T-cell (primary cell): ENCODE measurements at regions of chrX and their contacts with region 1.

Region 1: GRCh38 chrX:53211391-53211978 is 13.5 kb downstream of the KDM5C start:
- DNase-seq: no peak
- ATAC-seq: no peak
- H3K4me3 ChIP-seq: no peak overlapping the region
- H3K4me3 Mint-ChIP-seq: no peak overlapping the region
- H3K27ac ChIP-seq: no peak overlapping the region
- H3K27ac Mint-ChIP-seq: no peak overlapping the region
- H3K4me1 ChIP-seq: no peaks in the 10 kb centered on the region
- H3K4me1 Mint-ChIP-seq: peaks cover 0 to 10% (median 0%) of the 10 kb centered on the region in 3 donors
- H3K27me3 ChIP-seq: no peaks in the 10 kb centered on the region
- H3K27me3 Mint-ChIP-seq: no peaks in the 10 kb centered on the region

Region 2: GRCh38 chrX:53190363-53190960 is 21.0 kb before region 1 on chrX:
- CTCF ChIA-PET with region 1: interaction called in 1 of 2 experiments, 5 read pairs
- POLR2A ChIA-PET with region 1: interaction called in 1 of 2 experiments, 10 read pairs
- DNase-seq: peak in 1 of 35 experiments; percentile 19
- ATAC-seq: no peak
- H3K4me3 ChIP-seq: no peak overlapping the region
- H3K4me3 Mint-ChIP-seq: no peak overlapping the region
- H3K27ac ChIP-seq: no peak overlapping the region
- H3K27ac Mint-ChIP-seq: peak overlapping the region; percentile 55 to 59
- H3K4me1 ChIP-seq: no peaks in the 10 kb centered on the region
- H3K4me1 Mint-ChIP-seq: no peaks in the 10 kb centered on the region
- H3K27me3 ChIP-seq: no peaks in the 10 kb centered on the region
- H3K27me3 Mint-ChIP-seq: no peaks in the 10 kb centered on the region

Region 3: DNA sequence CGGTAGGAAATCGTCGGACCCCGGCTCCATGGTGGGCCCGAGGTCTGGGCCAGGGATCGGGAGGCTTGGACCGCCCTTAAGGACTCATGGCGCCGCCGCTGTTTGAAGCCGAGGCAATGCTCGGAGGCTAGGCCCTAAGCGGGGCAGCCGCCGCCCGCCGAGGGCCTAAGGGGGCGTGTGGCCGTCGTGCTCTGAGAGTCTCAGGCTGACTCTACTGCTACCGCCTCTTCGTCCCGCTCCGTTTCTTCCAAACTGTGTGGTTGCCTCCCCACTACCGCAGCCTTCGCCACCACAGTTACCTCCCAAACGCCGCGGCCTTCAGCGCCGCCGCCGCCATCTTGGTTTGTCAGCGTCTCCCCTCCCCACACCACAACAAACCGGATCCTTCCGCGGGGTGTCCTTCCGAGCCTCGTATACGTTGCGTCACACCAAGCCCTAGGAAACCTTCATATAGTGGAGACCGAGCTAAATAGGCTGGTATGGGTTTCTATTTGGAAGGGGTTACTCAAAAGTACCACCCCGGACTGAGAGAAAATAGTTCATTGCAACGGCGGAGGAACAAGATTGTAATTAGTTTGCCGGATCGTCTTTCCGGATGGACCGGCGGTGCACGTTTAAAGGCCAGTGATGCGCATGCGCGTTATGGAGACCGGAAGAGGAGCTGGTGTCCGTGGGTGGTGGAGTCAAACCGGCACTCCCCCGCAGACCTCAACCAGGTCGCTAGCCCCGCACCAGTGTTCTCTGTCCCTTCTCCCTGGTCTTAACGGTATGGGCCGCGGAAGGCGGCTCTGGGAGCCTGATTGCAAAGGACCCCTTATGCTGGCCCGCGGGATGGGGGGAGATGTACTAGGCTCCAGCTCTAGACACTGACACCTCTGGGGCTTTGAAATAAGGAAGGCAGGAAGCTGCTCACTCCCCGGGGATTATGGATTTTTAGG is 13.6 kb after region 1 on chrX and contains the start of gene KDM5C:
- CTCF ChIA-PET with region 1: no interaction called
- POLR2A ChIA-PET with region 1: interaction called, 3 to 11 read pairs
- DNase-seq: peak; percentile 75 to 96 (median 84)
- ATAC-seq: peak; percentile 81 to 88 (median 86)
- H3K4me3 ChIP-seq: peak within 1 kb of the TSS; percentile 76 to 78
- H3K4me3 Mint-ChIP-seq: peak within 1 kb of the TSS; percentile 95 to 99 (median 97)
- H3K27ac ChIP-seq: peak within 1 kb of the TSS; percentile 88
- H3K27ac Mint-ChIP-seq: peak within 1 kb of the TSS; percentile 96 to 100
- H3K4me1 ChIP-seq: peaks cover 22 to 30% of the 10 kb centered on the region in 2 experiments
- H3K4me1 Mint-ChIP-seq: peaks cover 43 to 62% (median 47%) of the 10 kb centered on the region in 3 donors
- H3K27me3 ChIP-seq: no peaks in the 10 kb centered on the region
- H3K27me3 Mint-ChIP-seq: no peaks in the 10 kb centered on the region
- total RNA-seq, gene KDM5C: 130 to 329 (median 197) TPM

Region 4: GRCh38 chrX:53760095-53760494 is 548.6 kb after region 1 on chrX:
- CTCF ChIA-PET with region 1: no interaction called
- POLR2A ChIA-PET with region 1: interaction called in 1 of 2 experiments, 10 read pairs
- DNase-seq: no peak
- ATAC-seq: no peak
- H3K4me3 ChIP-seq: no peak overlapping the region
- H3K4me3 Mint-ChIP-seq: no peak overlapping the region
- H3K27ac ChIP-seq: no peak overlapping the region
- H3K27ac Mint-ChIP-seq: no peak overlapping the region
- H3K4me1 ChIP-seq: no peaks in the 10 kb centered on the region
- H3K4me1 Mint-ChIP-seq: no peaks in the 10 kb centered on the region
- H3K27me3 ChIP-seq: no peaks in the 10 kb centered on the region
- H3K27me3 Mint-ChIP-seq: peaks cover 0 to 18% of the 10 kb centered on the region in 2 donors

Region 5: GRCh38 chrX:54044126-54044876 is 832.8 kb after region 1 on chrX and contains the start of gene PHF8:
- CTCF ChIA-PET with region 1: no interaction called
- POLR2A ChIA-PET with region 1: interaction called in 1 of 2 experiments, 13 read pairs
- DNase-seq: peak; percentile 82 to 97 (median 93)
- ATAC-seq: peak; percentile 84 to 86 (median 85)
- H3K4me3 ChIP-seq: peak within 1 kb of the TSS; percentile 59 to 75
- H3K4me3 Mint-ChIP-seq: peak within 1 kb of the TSS; percentile 91 to 96 (median 94)
- H3K27ac ChIP-seq: peak within 1 kb of the TSS; percentile 93
- H3K27ac Mint-ChIP-seq: peak within 1 kb of the TSS; percentile 98
- H3K4me1 ChIP-seq: peaks cover 10 to 13% of the 10 kb centered on the region in 2 experiments
- H3K4me1 Mint-ChIP-seq: peaks cover 17 to 27% (median 23%) of the 10 kb centered on the region in 3 donors
- H3K27me3 ChIP-seq: no peaks in the 10 kb centered on the region
- H3K27me3 Mint-ChIP-seq: peaks cover 0 to 10% of the 10 kb centered on the region in 2 donors
- total RNA-seq, gene PHF8: 52.3 to 68.1 (median 63.7) TPM